Mucosa of descending colon (tissue), 3 donors: ENCODE measurements at regions of chr9 and their contacts with region 1.

Region 1: DNA sequence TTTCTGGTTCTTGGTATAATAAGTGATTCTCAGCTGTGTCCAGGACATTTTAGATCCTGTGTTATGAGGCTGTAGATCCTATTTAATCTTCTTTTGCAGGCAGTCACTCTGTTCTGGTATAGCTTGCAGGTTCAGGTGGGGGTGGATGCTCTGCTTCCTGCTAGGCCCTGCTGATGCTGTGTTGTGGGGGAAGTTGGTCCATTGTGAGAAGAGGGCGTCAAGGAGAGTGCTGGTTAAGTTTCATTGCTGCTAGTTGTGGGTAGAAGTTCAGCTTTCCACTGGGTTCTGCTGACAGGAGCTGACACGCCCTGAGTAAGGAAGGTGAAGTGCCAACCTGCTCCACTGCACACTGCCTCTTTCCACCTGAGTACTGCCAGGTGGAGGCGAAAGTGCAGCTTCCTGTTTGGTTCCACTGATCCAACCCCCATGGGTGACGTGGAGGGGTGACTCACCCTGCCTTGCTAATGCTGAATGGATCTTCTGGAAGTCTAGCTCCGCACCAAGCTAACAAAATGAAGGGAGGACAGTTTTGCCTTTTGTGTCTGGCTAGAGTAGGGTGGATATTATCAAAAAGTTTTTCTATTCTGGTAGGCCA is 16.3 kb downstream of the NMRK1 start:
- DNase-seq: peak; percentile 87 to 94 (median 88)
- ATAC-seq: peak; percentile 100
- H3K4me3 ChIP-seq: no peak overlapping the region
- H3K4me1 ChIP-seq: no peaks in the 10 kb centered on the region
- CTCF ChIP-seq: no peak

Region 2: GRCh38 chr9:74463825-74464224 is 607.8 kb before region 1 on chr9:
- intact Hi-C with region 1: no loop called
- DNase-seq: no peak
- ATAC-seq: no peak
- H3K4me3 ChIP-seq: no peak overlapping the region
- H3K4me1 ChIP-seq: no peaks in the 10 kb centered on the region
- CTCF ChIP-seq: no peak

Region 3: DNA sequence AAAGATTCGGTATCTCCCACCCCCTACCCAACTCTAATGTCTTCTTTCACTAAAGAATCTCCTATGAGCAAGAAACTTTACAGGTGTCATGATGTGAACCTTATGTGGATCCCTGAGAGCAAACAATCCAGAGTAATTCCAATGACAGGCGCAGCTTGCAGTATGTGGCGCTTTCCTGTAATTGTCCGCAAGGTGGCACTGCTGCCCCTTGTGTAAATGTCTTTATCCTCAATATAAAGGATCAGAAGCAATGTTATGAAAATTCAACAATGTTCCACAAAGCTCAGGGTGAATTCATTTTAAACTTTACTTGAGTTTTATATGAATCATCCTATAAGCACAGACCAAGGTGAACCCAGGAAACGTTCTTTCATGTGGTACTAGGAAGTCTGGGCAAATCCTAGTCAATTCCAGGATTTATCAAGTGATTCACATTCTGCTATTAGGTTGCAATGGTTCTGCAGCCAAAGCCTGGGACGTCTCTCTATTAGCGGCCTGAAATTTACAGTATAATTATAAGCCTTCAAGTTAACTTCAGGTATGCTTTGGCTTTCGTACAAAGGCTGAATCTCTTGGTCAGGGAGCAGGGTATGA is 297.6 kb before region 1 on chr9:
- intact Hi-C with region 1: loop called (anchors 5 kb)
- DNase-seq: peak; percentile 68 to 92 (median 82)
- ATAC-seq: peak; percentile 90
- H3K4me3 ChIP-seq: no peak overlapping the region
- H3K4me1 ChIP-seq: no peaks in the 10 kb centered on the region
- CTCF ChIP-seq: peak; percentile 71

Region 4: DNA sequence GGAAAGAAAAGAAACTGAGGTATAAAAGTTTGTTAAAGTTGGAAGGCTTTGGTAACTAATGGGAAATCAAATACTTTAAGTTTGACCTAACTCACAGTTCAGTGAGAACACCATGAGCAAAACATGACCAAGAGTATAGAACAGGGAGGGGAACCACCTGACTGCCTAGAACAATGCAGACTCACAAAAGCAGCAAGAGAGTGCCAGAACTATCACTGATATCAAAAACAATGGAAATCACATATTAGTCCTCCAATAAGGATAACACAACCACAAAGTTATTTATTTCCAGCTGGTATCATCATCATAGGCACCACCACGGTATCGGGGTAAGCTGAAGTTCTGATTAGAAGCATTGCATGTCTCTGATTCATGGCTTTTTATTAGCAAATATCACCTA is 261.4 kb before region 1 on chr9:
- intact Hi-C with region 1: no loop called
- DNase-seq: no peak
- ATAC-seq: no peak
- H3K4me3 ChIP-seq: no peak overlapping the region
- H3K4me1 ChIP-seq: no peaks in the 10 kb centered on the region
- CTCF ChIP-seq: no peak

Region 5: GRCh38 chr9:74846771-74847170 is 224.9 kb before region 1 on chr9:
- intact Hi-C with region 1: no loop called
- DNase-seq: no peak
- ATAC-seq: no peak
- H3K4me3 ChIP-seq: no peak overlapping the region
- H3K4me1 ChIP-seq: no peaks in the 10 kb centered on the region
- CTCF ChIP-seq: no peak

Region 6: DNA sequence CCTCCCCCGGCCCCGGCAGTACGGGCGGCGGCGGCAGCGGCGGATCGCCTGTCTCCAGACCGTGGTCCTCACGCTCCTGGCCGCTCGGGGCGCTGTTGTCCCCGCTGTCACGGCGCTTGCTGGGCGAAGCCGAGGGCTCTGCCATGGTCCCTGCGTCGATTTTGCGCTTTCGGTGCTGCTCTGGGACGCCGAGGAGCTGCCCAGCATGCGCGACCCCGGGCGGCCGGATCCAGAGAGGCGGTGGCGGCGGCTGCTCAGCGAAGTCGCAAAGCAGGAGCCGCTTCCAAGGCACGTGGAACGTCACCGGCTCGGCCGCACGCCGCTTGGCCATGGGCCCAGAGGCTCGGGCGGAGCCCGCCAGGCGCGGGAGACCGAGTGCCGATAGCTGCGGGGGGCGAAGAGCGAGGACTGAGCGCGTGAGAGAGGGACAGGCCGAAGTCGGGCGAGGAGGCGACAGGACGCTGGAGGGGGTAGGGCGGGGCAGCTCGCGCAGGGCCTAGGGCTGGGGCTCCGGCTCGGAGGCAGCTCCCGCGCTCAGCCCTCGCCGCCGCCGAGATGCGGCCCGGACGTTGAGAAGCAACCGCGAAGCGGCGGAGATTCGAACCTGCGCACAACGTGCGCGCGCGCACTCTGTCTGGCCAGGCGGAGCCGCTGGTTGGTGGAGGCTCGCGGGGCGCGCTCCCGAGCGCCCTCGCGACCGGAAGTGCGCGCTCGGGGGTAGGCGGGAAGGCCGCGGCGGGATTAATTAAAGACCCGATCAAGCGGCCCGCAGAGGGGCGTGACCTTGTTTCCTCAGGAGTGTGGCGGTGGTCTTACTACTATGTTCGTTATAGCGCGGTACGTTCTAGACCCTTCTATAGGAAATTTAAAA is 119.1 kb before region 1 on chr9 and contains the start of gene C9orf40:
- intact Hi-C with region 1: loop called in 1 of 2 experiments (anchors 10 kb)
- DNase-seq: peak; percentile 94 to 97 (median 95)
- ATAC-seq: peak; percentile 98
- H3K4me3 ChIP-seq: peak within 1 kb of the TSS; percentile 79
- H3K4me1 ChIP-seq: no peaks in the 10 kb centered on the region
- CTCF ChIP-seq: peak; percentile 86
- total RNA-seq, gene C9orf40: 7.8 to 8.9 (median 7.8) TPM

Region 7: GRCh38 chr9:75027187-75028107 is 44.2 kb before region 1 on chr9:
- intact Hi-C with region 1: loop called in 1 of 2 experiments (anchors 10 kb)
- DNase-seq: peak; percentile 72 to 87 (median 82)
- ATAC-seq: peak; percentile 73
- H3K4me3 ChIP-seq: peak overlapping the region; percentile 67
- H3K4me1 ChIP-seq: peaks cover 9% of the 10 kb centered on the region
- CTCF ChIP-seq: no peak